ENCODE measurements at regions of chr2 and their contacts with region 1.

Region 1: DNA sequence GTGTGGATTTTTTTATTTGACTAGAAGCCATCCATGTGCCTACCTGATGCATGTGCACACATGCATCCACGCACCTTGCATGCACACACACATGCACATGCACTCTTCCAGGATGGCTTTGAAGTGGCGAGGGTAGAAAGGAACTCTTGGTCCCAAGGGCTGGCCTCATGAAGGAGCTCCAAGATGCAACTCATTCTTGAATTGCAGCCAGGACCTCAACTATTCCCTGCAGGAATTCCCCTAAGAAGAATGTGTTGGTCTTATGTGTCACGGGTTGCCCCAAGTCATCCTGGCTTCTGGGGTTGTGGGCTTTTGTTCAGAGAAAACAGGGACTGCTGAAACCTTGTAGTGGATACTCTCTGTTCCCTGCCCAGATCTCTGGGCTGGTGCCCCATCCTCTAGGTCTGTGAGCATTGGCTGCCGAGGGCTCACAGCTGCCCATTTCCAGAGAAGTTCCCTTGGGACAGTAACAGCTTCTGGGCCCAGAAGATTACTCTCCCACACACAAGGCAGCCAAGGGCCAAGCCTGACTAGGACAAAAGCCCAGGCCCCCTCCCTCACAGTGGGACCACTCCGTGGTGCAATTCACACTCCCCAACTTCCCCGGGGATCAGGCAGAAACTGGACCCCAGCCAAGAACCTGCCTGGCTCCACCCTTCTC is 137.6 kb downstream of the COPS8 start:
- DNase-seq: peak; percentile 100
- ATAC-seq: peak; percentile 64
- H3K4me3 ChIP-seq: no peak overlapping the region
- H3K27ac ChIP-seq: peak overlapping the region; percentile 99
- H3K4me1 ChIP-seq: peaks cover 30% of the 10 kb centered on the region
- H3K27me3 ChIP-seq: no peaks in the 10 kb centered on the region
- CTCF ChIP-seq: no peak
- POLR2A ChIP-seq: peak; percentile 58; the same call in 1 of the 2 replicates
- RAD21 ChIP-seq: peak; percentile 42

Region 2: DNA sequence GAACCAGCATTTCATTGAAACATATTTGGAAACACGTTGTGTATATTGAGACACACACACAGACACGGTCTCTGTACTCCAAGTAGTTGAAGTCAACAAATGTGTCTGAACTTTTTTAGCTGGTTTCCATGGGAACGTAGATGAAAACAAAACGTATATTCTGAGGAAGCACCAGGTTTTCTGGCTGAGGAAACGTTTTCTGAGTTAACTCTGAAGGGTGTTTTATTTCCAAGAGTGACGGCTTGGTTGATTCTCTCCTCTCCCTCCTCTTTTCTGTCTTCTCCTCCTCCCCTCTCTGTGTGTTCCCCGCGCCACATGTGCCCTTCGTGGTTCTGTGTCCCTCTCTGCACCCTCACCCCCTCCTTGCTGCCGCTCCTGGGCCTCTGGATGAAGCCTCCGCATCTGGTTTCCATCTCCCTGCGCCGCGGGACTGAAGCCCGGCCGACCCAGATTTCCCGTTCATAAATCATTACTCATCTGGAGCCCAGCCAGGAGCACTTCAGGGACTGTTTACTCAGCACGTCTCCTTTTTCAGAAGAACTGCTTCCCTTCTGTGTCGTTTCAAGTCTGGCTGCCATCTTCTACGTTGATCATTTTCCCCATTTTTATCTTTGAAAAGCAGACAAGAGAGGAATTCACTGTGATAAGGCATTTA is 67.9 kb after region 1 on chr2:
- CTCF ChIA-PET with region 1: no interaction called
- POLR2A ChIA-PET with region 1: interaction called, 3 read pairs
- dilution Hi-C with region 1: no loop called
- in situ Hi-C with region 1: no loop called
- intact Hi-C with region 1: loop called (anchors 2 kb)
- DNase-seq: peak; percentile 98
- ATAC-seq: peak; percentile 86
- H3K4me3 ChIP-seq: no peak overlapping the region
- H3K27ac ChIP-seq: peak overlapping the region; percentile 96
- H3K4me1 ChIP-seq: peaks cover 15% of the 10 kb centered on the region
- H3K27me3 ChIP-seq: no peaks in the 10 kb centered on the region
- CTCF ChIP-seq: no peak
- POLR2A ChIP-seq: peak; percentile 61
- RAD21 ChIP-seq: peak; percentile 32

Measured in IMR-90 (cell line).